Activated CD4-positive, alpha-beta memory T cell treated with anti-CD3 and anti-CD28 coated beads, Interleukin-2, amount 10 ng/mL, durations not matched to agents 7 days and 5 days (primary cell): ENCODE measurements at regions of chr5 and their contacts with region 1.

Region 1: GRCh38 chr5:80255732-80256479 is at the start of gene SERINC5:
- DNase-seq: peak; percentile 86
- H3K4me3 Mint-ChIP-seq: peak within 1 kb of the TSS; percentile 93
- H3K27ac Mint-ChIP-seq: peak within 1 kb of the TSS; percentile 91
- H3K4me1 Mint-ChIP-seq: peaks cover 45% of the 10 kb centered on the region
- H3K27me3 Mint-ChIP-seq: no peaks in the 10 kb centered on the region
- total RNA-seq, gene SERINC5: 59.1 to 60.6 TPM

Region 2: DNA sequence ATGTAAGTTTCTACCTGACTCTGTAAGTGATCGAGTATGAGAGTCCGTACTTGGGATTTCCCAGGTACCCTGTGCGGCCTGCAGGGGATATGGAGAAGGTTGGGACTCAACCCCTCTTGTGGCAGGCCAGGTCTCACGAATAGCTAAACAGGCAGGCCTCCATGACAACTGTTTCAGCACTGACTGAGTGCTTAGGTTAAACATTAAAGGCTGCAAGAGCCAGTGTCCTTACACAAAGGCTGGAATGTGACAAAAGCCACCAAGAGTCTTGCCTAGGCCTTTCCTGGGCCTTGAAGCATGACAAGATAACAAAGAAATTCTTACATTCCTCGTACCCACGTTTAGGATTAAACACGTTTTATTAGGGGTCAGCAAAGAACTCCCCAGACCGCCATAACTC is 162.1 kb before region 1 on chr5:
- CTCF ChIA-PET with region 1: interaction called, 35 read pairs
- POLR2A ChIA-PET with region 1: interaction called, 33 read pairs
- DNase-seq: no peak
- H3K4me3 Mint-ChIP-seq: no peak overlapping the region
- H3K27ac Mint-ChIP-seq: no peak overlapping the region
- H3K4me1 Mint-ChIP-seq: peaks cover 15% of the 10 kb centered on the region
- H3K27me3 Mint-ChIP-seq: no peaks in the 10 kb centered on the region

Region 3: GRCh38 chr5:80141147-80141671 is 114.7 kb before region 1 on chr5:
- CTCF ChIA-PET with region 1: interaction called, 7 read pairs
- POLR2A ChIA-PET with region 1: interaction called, 52 read pairs
- DNase-seq: no peak
- H3K4me3 Mint-ChIP-seq: no peak overlapping the region
- H3K27ac Mint-ChIP-seq: peak overlapping the region; percentile 90
- H3K4me1 Mint-ChIP-seq: peaks cover 76% of the 10 kb centered on the region
- H3K27me3 Mint-ChIP-seq: no peaks in the 10 kb centered on the region

Region 4: DNA sequence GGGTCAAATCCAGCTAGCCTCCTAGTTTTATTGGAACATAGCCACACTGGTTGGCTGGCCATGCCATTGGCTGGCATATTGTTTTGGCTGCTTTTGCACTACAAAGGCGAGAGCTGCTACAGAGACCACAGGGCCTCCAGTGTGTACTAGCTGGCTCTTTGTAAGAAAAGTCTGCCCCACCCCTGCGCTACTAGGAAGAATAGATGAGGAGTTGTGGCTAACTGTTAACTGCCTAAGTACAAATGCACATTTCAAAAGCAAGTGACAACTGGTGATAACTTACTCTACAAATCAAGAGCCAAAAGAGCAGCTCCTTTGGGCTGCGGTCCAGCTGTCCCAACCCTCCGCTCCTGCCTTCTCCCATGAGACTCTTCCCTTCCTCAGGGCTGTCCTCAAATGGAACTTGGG is 63.9 kb before region 1 on chr5:
- CTCF ChIA-PET with region 1: interaction called, 20 read pairs
- POLR2A ChIA-PET with region 1: interaction called, 397 read pairs
- DNase-seq: peak; percentile 73
- H3K4me3 Mint-ChIP-seq: peak overlapping the region; percentile 56
- H3K27ac Mint-ChIP-seq: peak overlapping the region; percentile 97
- H3K4me1 Mint-ChIP-seq: peaks cover 82% of the 10 kb centered on the region
- H3K27me3 Mint-ChIP-seq: no peaks in the 10 kb centered on the region

Region 5: DNA sequence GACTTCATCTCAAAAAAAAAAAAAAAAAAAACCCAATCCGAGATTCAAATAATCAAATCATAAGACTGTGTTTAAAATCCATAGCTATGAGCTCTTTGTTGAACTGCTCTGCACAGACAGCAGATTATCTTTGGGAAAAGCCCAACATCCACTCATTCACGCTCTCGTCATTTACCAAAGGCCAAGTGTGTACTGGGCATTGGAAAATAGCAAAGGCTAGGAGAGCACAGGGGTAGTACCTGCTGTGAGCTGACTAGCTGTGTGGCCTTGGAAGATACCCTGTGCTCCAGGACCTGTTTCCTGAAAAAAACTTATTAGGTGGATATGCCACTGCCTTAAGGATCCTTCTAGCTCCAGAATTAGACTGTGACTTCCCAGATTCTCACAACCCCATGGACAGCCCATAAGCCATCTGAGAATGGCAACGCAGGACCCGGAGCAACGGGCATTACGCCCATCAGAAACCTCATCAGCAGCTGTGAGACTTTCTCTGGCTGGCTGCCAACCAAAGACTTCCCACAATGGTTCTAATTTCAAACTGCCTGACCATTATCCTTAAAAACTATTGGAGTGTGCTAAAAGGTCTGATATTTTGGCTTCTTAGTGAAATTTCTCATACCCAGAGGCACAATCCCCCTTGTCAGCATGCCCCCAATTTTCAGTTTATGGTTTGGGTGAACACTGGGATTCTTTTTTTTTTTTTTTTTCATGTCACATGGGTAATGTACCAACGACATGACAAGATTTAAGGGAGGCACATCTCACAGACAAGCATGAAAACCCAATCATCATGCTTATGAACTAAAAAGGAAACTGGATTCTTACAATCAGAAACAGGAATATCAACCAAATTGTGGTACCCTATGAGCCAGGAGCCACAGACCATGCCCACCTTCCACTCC is 16.9 kb before region 1 on chr5:
- CTCF ChIA-PET with region 1: interaction called, 4 read pairs
- POLR2A ChIA-PET with region 1: interaction called, 94 read pairs
- DNase-seq: no peak
- H3K4me3 Mint-ChIP-seq: no peak overlapping the region
- H3K27ac Mint-ChIP-seq: peak overlapping the region; percentile 31
- H3K4me1 Mint-ChIP-seq: peaks cover 54% of the 10 kb centered on the region
- H3K27me3 Mint-ChIP-seq: no peaks in the 10 kb centered on the region